Tibial artery (tissue), 4 donors: ENCODE measurements at regions of chr16 and their contacts with region 1.

Region 1: DNA sequence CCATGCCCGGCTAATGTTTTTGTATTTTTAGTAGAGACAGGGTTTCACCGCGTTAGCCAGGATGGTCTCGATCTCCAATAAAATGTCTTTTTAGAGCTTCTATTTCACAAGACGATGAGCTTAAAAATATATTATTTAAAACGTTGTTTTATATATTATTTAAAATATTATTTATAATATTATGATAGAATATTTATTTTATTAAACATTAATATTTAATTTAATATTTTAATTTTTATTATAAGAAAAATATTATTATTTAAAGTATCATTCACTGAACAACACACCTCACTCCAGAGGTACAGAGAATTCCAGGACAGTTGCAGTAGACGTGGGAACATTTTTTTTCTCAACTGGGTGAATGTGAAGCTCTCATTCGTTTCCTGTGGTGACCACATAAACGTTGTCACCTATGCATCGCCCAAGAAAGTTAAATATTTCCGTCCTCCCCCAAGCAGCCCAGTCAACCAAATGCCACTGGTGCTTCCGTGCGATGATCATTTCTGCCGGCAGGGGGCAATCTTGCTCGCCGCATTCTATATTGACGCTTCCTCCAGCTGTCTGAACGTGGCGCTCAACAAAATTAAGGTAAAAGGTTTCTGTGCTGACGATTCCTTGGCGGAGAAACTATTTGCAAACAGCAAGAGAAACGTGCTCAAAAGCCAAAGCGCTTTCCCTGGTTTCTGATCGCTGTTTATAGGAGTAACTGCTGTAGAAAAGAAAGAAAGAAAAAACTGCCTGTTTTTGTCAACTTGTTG is 41.7 kb upstream of the PRSS54 start:
- DNase-seq: peak; percentile 81 to 83
- H3K4me3 ChIP-seq: peak overlapping the region in 1 of 2 donors; percentile 23
- H3K27ac ChIP-seq: no peak overlapping the region
- H3K4me1 ChIP-seq: peaks cover 0 to 12% (median 0%) of the 10 kb centered on the region in 4 donors
- H3K27me3 ChIP-seq: peaks cover 0 to 8% of the 10 kb centered on the region in 2 donors
- CTCF ChIP-seq: peak; percentile 81 to 84

Region 2: GRCh38 chr16:58487566-58488351 is 151.2 kb after region 1 on chr16:
- intact Hi-C with region 1: loop called (anchors 5 kb)
- DNase-seq: peak; percentile 65 to 81
- H3K4me3 ChIP-seq: no peak overlapping the region
- H3K27ac ChIP-seq: no peak overlapping the region
- H3K4me1 ChIP-seq: peaks cover 0 to 7% (median 3%) of the 10 kb centered on the region in 4 donors
- H3K27me3 ChIP-seq: peaks cover 0 to 32% of the 10 kb centered on the region in 2 donors
- CTCF ChIP-seq: peak; percentile 84